ENCODE measurements at regions of chr4 and their contacts with region 1.

Region 1: GRCh38 chr4:52545099-52546069 is 113.7 kb downstream of the USP46 start:
- DNase-seq: peak; percentile 47
- ATAC-seq: peak; percentile 65
- H3K4me3 Mint-ChIP-seq: no peak overlapping the region
- H3K27ac Mint-ChIP-seq: no peak overlapping the region
- H3K4me1 Mint-ChIP-seq: no peaks in the 10 kb centered on the region
- H3K27me3 Mint-ChIP-seq: peaks cover 5% of the 10 kb centered on the region
- CTCF ChIP-seq: no peak

Region 2: DNA sequence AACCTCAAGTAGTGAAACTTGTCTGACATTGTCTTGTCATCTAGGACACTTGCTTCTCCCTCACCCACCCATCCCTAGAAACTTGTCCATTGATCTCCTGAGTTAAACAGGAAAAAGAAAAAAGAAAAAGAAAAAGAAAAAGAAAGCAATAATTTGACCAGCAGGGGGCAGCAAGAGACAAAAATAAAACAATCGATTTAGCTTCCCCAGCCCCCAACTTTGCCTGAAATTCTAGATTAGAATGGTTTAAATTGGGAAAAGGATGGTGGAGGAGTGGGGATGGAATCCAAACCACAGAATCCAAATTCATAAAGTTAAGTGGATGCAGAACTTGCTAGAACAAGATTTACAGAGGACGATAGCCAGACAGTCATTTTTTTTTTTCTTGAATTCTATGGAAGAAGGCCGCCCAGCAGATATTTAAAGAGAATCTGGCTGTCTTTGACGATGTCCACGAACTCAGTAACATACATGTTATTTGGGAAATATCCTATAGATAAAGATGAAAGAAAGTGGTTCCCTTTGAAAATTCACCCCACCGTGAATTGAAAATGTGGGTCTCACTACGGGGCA is 169.2 kb before region 1 on chr4:
- CTCF ChIA-PET with region 1: no interaction called
- POLR2A ChIA-PET with region 1: no interaction called
- intact Hi-C with region 1: loop called (anchors 2 kb)
- DNase-seq: no peak
- ATAC-seq: no peak
- H3K4me3 Mint-ChIP-seq: no peak overlapping the region
- H3K27ac Mint-ChIP-seq: no peak overlapping the region
- H3K4me1 Mint-ChIP-seq: no peaks in the 10 kb centered on the region
- H3K27me3 Mint-ChIP-seq: peaks cover 12% of the 10 kb centered on the region
- CTCF ChIP-seq: peak; percentile 45

Region 3: DNA sequence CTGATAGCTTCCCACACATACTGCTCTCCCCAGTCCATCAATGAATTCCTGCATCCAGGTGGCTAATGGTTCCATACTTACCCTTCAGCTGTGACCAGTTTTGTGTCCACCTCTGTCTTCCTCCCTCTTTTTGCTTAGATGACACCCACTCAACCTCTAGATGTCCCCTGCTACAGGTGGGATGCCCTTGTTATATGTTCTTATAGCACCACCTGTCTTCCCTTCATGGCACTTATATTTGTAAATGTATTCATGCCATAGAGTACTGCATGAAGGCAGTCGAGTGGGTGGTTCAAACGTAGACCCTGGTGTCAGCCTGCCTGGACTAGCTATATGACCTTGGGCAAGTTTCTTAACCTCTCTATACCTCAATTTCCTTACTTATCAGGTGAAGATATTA is 120.2 kb after region 1 on chr4:
- CTCF ChIA-PET with region 1: interaction called, 9 read pairs
- POLR2A ChIA-PET with region 1: no interaction called
- intact Hi-C with region 1: loop called (anchors 2 kb)
- DNase-seq: no peak
- ATAC-seq: peak; percentile 54
- H3K4me3 Mint-ChIP-seq: no peak overlapping the region
- H3K27ac Mint-ChIP-seq: no peak overlapping the region
- H3K4me1 Mint-ChIP-seq: peaks cover 2% of the 10 kb centered on the region
- H3K27me3 Mint-ChIP-seq: peaks cover 15% of the 10 kb centered on the region
- CTCF ChIP-seq: no peak

Measured in activated B cell treated with CpG ODN at 0.5 μM for 24 hours (primary cell).